Posterior cingulate gyrus (tissue), 11 donors: ENCODE measurements at regions of chr4 and their contacts with region 1.

Region 1: DNA sequence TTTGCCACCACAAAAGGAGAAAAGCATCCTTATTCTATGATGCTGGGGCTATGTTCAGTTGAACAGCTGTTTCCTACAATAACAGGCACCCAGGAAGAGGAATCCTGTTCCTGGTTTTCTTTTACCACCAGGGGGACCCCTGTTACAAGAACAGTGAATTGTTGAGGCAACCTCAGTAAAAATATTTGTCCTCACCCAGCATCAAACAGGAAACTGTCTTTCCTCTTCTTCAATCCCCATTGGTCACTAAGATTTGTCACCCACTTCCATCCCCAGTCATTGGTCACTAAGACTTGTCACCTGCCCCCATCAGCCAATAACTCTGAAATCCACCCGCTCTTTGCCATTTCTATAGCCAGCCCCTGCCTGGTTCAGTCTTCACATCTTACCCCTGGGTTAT is 143.5 kb upstream of the GALNT7 start:
- DNase-seq: peak in 3 of 10 donors; percentile 20 to 27 (median 27)

Region 2: DNA sequence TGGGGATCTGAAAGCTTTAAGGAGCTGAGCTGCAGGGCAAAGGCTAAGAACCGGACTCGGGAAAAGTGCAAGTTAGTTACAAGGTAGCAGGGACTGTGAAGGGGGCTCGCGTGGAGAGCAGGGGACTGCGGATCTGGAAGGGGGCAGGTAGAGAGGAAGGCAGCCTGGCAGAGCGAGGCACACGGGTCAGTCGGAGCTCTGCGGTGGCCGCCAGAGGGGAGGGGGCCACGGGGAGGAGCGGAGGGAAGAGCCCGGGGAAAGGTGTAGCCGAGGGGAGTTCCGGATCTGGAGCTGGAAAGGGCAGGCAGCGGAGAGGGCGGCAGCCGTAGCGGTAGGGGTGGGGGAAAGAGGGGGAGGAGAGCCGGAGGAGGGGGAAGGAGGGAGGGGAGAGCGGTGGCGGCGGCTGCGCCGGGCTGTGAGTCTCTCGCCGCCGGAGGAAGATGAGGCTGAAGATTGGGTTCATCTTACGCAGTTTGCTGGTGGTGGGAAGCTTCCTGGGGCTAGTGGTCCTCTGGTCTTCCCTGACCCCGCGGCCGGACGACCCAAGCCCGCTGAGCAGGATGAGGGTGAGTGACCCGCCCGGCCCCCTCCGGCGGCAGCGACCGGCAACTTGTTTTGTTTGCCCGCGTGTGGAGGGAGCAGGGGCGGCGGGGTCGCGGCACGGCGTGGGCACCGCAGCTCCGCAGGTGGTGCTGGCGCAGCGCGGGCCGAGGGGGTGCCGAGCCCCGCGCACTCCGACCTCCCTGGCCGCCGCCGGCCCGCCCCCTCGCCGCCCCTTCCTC is 143.5 kb after region 1 on chr4 and contains the start of gene GALNT7:
- intact Hi-C with region 1: loop called (anchors 10 kb)
- DNase-seq: peak; percentile 32 to 93 (median 62)